ENCODE measurements at regions of chr5 and their contacts with region 1.

Region 1: DNA sequence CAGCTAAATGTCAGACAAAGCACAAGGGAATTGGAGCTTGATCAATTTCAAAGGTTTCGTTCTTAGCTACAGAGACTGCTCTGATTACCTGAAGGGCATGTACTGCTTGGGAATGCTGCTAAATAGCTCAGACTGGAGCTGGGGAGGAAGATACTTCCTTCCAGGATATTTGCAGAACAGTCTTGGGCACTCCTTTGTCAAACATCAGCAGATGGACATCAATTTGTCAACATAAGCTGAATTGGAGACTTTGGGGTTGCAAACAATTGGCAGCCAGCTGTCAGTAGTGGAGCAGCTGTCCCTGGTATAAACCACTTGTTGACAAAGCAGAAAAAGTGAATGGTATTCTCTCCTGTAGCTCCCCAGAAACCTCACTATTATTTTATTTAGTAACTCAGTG is 182.0 kb downstream of the CCDC192 start:
- DNase-seq: no peak
- H3K4me3 ChIP-seq: no peak overlapping the region
- H3K27ac ChIP-seq: no peak overlapping the region
- H3K4me1 ChIP-seq: no peaks in the 10 kb centered on the region
- H3K27me3 ChIP-seq: no peaks in the 10 kb centered on the region
- CTCF ChIP-seq: no peak
- POLR2A ChIP-seq: no peak

Region 2: GRCh38 chr5:128083033-128083810 is 198.0 kb after region 1 on chr5 and contains the start of gene SLC12A2:
- intact Hi-C with region 1: loop called in 1 of 2 experiments (anchors 10 kb)
- DNase-seq: peak; percentile 93 to 96 (median 94)
- H3K4me3 ChIP-seq: peak within 1 kb of the TSS; percentile 56 to 98 (median 82)
- H3K27ac ChIP-seq: peak within 1 kb of the TSS; percentile 83 to 97 (median 86)
- H3K4me1 ChIP-seq: peaks cover 18 to 55% of the 10 kb centered on the region in 2 donors
- H3K27me3 ChIP-seq: no peaks in the 10 kb centered on the region
- CTCF ChIP-seq: peak in 1 of 6 experiments; percentile 14
- POLR2A ChIP-seq: peak; percentile 85 to 90
- total RNA-seq, gene SLC12A2: 21.5 to 82.6 (median 62.2) TPM